Activated CD4-positive, alpha-beta T cell treated with anti-CD3 and anti-CD28 coated beads, Interleukin-2, amount 10 ng/mL, durations not matched to agents 24 days and 14 days (primary cell): ENCODE measurements at regions of chr1 and their contacts with region 1.

Region 1: DNA sequence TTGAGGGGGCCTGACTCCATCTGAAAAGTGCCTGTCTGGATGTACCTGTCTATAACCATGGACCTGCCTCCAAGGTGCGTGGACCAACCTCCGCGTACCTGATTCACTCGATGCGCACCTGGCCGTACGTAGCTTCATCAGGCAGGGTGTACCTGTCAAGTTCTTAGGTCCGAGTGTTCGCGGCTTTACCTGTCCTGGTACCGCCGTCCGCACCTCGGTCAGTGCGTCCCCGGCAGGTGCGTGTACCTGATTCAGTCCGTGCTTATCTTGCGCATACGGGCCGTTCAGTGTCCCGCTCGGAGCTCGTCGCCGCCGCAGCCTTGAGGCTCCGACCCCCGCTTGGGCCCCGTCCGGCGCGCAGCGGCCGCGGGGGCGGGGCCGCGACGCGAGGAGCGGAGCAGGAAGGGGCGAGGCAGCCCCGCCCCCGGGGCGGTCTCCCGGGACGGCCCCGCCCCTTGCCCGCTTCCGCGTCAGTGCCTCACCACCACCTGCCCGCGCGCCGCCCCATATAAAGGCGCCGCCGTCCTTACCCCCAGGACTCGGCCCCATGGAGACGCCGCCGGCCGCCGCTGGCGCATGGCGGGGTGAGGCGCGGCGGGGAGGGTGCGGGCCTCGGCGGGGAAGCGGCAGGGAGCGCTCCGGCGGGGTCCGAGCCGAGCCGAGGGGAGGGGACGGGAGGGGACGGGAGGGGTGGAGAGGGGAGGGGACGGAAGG is at the start of gene ZC3H12A:
- DNase-seq: peak; percentile 98
- H3K4me3 Mint-ChIP-seq: peak within 1 kb of the TSS; percentile 97
- H3K27ac Mint-ChIP-seq: peak within 1 kb of the TSS; percentile 98
- H3K4me1 Mint-ChIP-seq: peaks cover 41% of the 10 kb centered on the region
- H3K27me3 Mint-ChIP-seq: no peaks in the 10 kb centered on the region
- total RNA-seq, gene ZC3H12A: 39.3 and 40.4 TPM in 2 replicates

Region 2: GRCh38 chr1:38859561-38860453 is 1385.6 kb after region 1 on chr1 and contains the start of gene RRAGC:
- intact Hi-C with region 1: loop called (anchors 10 kb)
- DNase-seq: peak; percentile 100
- H3K4me3 Mint-ChIP-seq: peak within 1 kb of the TSS; percentile 88
- H3K27ac Mint-ChIP-seq: peak within 1 kb of the TSS; percentile 77
- H3K4me1 Mint-ChIP-seq: peaks cover 24% of the 10 kb centered on the region
- H3K27me3 Mint-ChIP-seq: no peaks in the 10 kb centered on the region
- total RNA-seq, gene RRAGC: 10.9 and 11.0 TPM in 2 replicates